CD8-positive, alpha-beta T cell (primary cell): ENCODE measurements at regions of chr17 and their contacts with region 1.

Region 1: GRCh38 chr17:81683584-81684237 is at the starts of genes ARL16 and HGS:
- DNase-seq: peak; percentile 95 to 99 (median 97)
- ATAC-seq: peak; percentile 98
- H3K4me3 ChIP-seq: peak within 1 kb of the TSS; percentile 89 to 98
- H3K4me3 Mint-ChIP-seq: peak within 1 kb of the TSS; percentile 89
- H3K27ac ChIP-seq: peak within 1 kb of the TSS; percentile 57 to 77
- H3K27ac Mint-ChIP-seq: peak within 1 kb of the TSS; percentile 88
- H3K4me1 ChIP-seq: peaks cover 27% of the 10 kb centered on the region
- H3K4me1 Mint-ChIP-seq: peaks cover 32% of the 10 kb centered on the region
- H3K27me3 ChIP-seq: no peaks in the 10 kb centered on the region
- H3K27me3 Mint-ChIP-seq: no peaks in the 10 kb centered on the region
- CTCF ChIP-seq: no peak
- total RNA-seq, gene ARL16: 14.3 to 16.4 TPM
- total RNA-seq, gene HGS: 121 to 126 TPM

Region 2: GRCh38 chr17:81566461-81567126 is 117.1 kb before region 1 on chr17:
- CTCF ChIA-PET with region 1: no interaction called
- POLR2A ChIA-PET with region 1: no interaction called
- intact Hi-C with region 1: no loop called
- DNase-seq: no peak
- ATAC-seq: no peak
- H3K4me3 ChIP-seq: no peak overlapping the region
- H3K4me3 Mint-ChIP-seq: no peak overlapping the region
- H3K27ac ChIP-seq: no peak overlapping the region
- H3K27ac Mint-ChIP-seq: peak overlapping the region; percentile 32
- H3K4me1 ChIP-seq: no peaks in the 10 kb centered on the region
- H3K4me1 Mint-ChIP-seq: peaks cover 2% of the 10 kb centered on the region
- H3K27me3 ChIP-seq: no peaks in the 10 kb centered on the region
- H3K27me3 Mint-ChIP-seq: no peaks in the 10 kb centered on the region
- CTCF ChIP-seq: no peak

Region 3: GRCh38 chr17:81636505-81637288 is 47.0 kb before region 1 on chr17 and contains the starts of genes NPLOC4 and TSPAN10:
- CTCF ChIA-PET with region 1: no interaction called
- POLR2A ChIA-PET with region 1: interaction called, 5 read pairs
- intact Hi-C with region 1: loop called (anchors 1 to 5 kb)
- DNase-seq: peak; percentile 66 to 93 (median 83)
- ATAC-seq: peak; percentile 96
- H3K4me3 ChIP-seq: peak within 1 kb of the TSS; percentile 85 to 90
- H3K4me3 Mint-ChIP-seq: peak within 1 kb of the TSS; percentile 90
- H3K27ac ChIP-seq: peak within 1 kb of the TSS; percentile 61 to 73
- H3K27ac Mint-ChIP-seq: peak within 1 kb of the TSS; percentile 91
- H3K4me1 ChIP-seq: peaks cover 19% of the 10 kb centered on the region
- H3K4me1 Mint-ChIP-seq: peaks cover 26% of the 10 kb centered on the region
- H3K27me3 ChIP-seq: no peaks in the 10 kb centered on the region
- H3K27me3 Mint-ChIP-seq: no peaks in the 10 kb centered on the region
- CTCF ChIP-seq: no peak
- total RNA-seq, gene NPLOC4: 55.9 to 69.6 TPM
- total RNA-seq, gene TSPAN10: 0.17 to 0.22 TPM

Region 4: GRCh38 chr17:81711814-81712467 is 28.2 kb after region 1 on chr17 and contains the start of gene SLC25A10:
- CTCF ChIA-PET with region 1: interaction called, 4 read pairs
- POLR2A ChIA-PET with region 1: interaction called, 8 read pairs
- intact Hi-C with region 1: loop called (anchors 1 kb)
- DNase-seq: peak; percentile 46 to 89 (median 74)
- ATAC-seq: peak; percentile 84
- H3K4me3 ChIP-seq: peak within 1 kb of the TSS; percentile 38 to 53
- H3K4me3 Mint-ChIP-seq: peak within 1 kb of the TSS; percentile 83
- H3K27ac ChIP-seq: no peak within 1 kb of the TSS
- H3K27ac Mint-ChIP-seq: no peak within 1 kb of the TSS
- H3K4me1 ChIP-seq: peaks cover 25% of the 10 kb centered on the region
- H3K4me1 Mint-ChIP-seq: peaks cover 13% of the 10 kb centered on the region
- H3K27me3 ChIP-seq: no peaks in the 10 kb centered on the region
- H3K27me3 Mint-ChIP-seq: no peaks in the 10 kb centered on the region
- CTCF ChIP-seq: no peak
- total RNA-seq, gene SLC25A10: 3.7 to 5.4 TPM